ENCODE measurements at regions of chr1 and their contacts with region 1.

Region 1: DNA sequence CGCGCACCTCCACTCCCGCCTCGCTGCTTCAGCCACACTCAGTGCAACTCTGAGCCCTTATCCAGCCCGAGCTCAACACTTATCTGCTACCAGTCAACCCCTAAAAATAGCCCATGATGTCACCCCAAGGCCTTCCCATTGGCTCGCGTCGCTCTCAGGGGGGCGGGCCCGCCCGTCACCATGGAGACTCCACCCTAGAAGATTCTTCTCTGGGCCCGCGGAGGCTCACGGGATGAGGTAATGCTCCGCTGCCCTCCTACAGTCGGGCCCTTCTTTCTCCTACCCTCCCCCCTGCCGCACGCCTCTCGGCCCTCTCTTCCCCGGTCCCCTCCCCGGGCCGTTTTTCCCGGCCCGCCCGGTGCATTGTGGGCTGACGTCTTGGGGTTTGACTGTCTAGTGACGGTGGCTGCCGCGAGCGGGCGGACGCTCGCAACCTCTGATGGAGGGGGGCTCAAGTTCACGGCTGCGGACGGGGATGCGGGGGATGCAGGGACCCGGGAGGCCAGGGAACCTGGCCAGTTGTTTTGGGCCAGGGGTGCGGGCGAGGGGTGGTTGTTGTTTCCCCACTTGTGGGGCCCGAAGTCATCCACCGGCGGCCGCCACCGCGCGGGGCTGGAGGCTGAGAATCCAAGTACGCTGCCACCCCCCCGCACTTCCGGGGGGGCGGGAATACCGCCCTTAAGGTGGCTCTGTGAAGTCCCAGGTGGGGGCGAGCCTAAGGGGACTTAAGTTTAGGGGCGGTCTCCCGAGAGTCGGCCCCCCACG is at the start of gene JUN:
- DNase-seq: peak; percentile 100
- ATAC-seq: peak; percentile 94
- total RNA-seq, gene JUN: 179 TPM

Region 2: DNA sequence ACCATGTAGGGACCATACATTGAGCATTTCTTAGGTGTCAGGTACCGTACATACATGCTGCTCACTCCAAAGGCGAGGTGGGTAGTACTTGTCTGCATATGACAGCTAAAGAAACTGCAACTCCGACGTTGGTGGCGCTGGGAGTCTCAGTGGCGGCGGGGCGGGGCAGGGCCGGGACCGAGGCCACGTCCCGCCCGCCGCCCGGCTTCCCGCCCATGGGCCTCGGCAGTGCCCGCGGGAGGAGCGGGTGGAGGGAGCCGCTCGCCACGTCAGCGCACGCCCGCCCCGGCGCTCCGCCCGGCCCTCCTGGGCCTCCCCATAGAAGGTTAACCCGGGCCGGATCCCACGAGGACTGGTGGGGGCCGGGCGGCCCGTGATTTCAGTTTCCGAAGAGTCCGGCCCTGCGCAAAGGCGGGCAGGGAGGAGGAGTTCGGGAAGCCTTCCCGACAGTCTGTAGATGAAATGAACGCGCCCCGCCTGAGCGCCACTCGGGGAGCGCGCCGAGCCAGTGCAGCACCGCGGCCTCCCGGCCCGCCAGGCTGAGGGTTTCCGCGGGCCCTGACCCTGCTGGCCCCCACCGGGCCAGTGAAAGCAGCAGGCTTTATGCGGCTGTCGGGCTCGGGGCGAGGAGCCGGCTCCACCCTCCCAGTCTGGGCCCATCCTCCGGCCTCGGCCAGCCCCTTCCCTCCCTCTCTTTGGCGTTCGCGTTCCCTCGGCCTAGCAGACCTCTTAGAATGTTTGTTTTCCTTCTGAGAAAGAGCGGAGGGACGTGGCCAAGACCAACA is 119.5 kb after region 1 on chr1:
- intact Hi-C with region 1: loop called (anchors 10 kb)
- DNase-seq: peak; percentile 96
- ATAC-seq: peak; percentile 92

Region 3: DNA sequence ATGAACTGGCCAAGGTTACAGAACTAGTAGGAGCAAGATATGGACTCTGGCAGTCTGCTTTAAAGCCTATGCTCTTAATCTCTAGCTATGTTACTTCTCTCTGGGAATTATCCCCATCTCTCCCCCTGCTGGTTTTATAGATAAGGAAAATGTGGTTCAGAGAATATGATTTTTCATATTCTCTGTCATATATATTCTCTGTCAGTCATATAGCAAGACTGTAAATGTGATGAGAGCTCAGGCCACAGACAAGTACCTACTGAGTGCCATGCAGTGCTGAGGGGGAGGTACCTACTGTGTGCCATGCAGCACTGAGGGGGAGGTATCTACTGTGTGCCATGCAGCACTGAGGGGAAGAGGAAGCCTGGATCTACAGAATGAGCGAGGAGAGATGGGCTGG is 292.4 kb after region 1 on chr1:
- intact Hi-C with region 1: loop called (anchors 10 kb)
- DNase-seq: no peak
- ATAC-seq: peak; percentile 37

Region 4: DNA sequence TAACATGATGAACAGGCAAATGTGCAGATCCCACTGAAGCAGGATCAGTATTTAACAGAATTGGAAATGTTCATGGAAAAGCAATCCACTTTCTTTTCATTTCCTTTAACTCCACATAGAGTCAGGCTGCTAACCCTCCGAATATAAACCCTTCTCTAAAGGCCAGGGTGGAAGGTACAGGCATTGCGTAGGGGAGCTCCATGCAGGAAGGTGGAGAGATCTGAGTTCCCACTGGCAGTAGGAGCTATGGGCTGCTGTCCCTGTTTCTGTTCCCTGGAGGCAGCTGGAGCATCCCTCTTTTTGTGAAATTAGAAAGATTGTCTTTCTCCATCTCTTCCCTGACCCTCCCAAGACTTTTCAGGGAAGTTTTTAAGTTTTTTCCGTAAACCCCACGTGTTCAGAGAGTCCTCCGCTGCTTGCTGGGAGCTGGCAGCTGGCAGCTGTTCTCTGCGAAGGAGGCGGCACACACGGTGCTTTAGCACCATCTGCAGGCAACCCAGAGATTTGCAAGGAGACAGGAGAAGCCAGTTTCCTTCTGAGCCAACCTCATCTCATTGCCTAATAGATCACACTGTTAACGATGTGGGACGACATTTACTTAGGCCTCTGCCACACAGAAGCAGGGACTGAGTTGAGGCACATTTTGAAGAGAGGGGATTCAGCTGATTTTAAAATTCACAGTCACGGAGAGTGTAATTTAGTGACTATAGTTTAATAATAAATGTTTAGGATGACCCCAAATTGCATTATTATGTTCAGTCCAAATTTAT is 975.2 kb after region 1 on chr1:
- intact Hi-C with region 1: loop called (anchors 10 kb)
- DNase-seq: peak; percentile 90
- ATAC-seq: peak; percentile 96